Activated CD4-positive, alpha-beta T cell treated with anti-CD3 and anti-CD28 coated beads, Interleukin-2, amount 10 ng/mL, durations not matched to agents 24 days and 14 days (primary cell): ENCODE measurements at regions of chr7 and their contacts with region 1.

Region 1: DNA sequence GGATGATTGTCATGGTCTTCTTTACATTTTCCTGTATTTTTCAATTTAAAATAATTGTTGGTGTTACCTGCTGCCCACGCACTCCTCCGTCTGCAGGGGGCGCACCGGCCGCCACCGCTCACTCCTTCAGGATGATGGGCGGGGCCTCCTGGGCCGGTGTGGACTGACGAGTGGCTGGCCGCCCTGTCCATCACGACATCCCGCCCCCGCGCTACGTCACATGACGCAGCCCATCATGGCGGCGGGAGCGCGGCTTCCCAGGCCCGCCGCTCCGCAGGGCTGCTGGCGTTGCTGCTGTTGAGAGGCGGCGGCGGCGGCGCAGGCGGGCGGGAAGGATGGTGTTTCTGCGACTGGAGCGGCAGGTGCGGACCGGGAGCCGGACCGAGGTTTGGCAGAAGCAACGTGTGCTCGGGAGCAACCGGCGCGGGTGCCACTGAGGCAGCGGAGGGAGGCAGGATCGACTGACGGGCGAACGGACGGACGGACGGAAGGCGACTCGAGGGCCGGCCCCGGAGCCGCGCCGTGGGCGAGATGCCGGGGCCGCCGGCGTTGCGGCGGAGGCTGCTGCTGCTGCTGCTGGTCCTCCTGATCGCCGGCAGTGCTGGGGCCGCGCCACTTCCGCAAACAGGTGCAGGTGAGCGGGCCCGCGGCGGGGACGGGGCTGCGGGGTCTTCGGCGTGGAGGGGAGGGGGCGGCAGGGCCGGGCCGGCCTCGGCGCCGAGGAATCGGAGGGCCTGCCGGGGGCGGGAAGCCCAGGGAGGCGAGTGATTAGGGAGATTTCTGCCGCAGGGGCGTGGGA is at the start of gene LMTK2:
- DNase-seq: peak; percentile 99
- H3K4me3 Mint-ChIP-seq: peak within 1 kb of the TSS; percentile 99
- H3K27ac Mint-ChIP-seq: peak within 1 kb of the TSS; percentile 95
- H3K4me1 Mint-ChIP-seq: peaks cover 20% of the 10 kb centered on the region
- H3K27me3 Mint-ChIP-seq: no peaks in the 10 kb centered on the region
- total RNA-seq, gene LMTK2: 12.0 and 15.1 TPM in 2 replicates

Region 2: GRCh38 chr7:97430001-97430400 is 676.8 kb before region 1 on chr7:
- intact Hi-C with region 1: no loop called
- DNase-seq: no peak
- H3K4me3 Mint-ChIP-seq: no peak overlapping the region
- H3K27ac Mint-ChIP-seq: no peak overlapping the region
- H3K4me1 Mint-ChIP-seq: no peaks in the 10 kb centered on the region
- H3K27me3 Mint-ChIP-seq: no peaks in the 10 kb centered on the region

Region 3: GRCh38 chr7:97872025-97872669 is 234.7 kb before region 1 on chr7 and contains the start of gene ASNS:
- intact Hi-C with region 1: loop called (anchors 5 kb)
- DNase-seq: peak; percentile 97
- H3K4me3 Mint-ChIP-seq: peak within 1 kb of the TSS; percentile 92
- H3K27ac Mint-ChIP-seq: peak within 1 kb of the TSS; percentile 88
- H3K4me1 Mint-ChIP-seq: peaks cover 13% of the 10 kb centered on the region
- H3K27me3 Mint-ChIP-seq: no peaks in the 10 kb centered on the region
- total RNA-seq, gene ASNS: 80.6 and 84.1 TPM in 2 replicates

Region 4: GRCh38 chr7:97971990-97972943 is 134.6 kb before region 1 on chr7:
- intact Hi-C with region 1: loop called (anchors 5 kb)
- DNase-seq: peak; percentile 95
- H3K4me3 Mint-ChIP-seq: peak overlapping the region; percentile 96
- H3K27ac Mint-ChIP-seq: peak overlapping the region; percentile 95
- H3K4me1 Mint-ChIP-seq: peaks cover 12% of the 10 kb centered on the region
- H3K27me3 Mint-ChIP-seq: peaks cover 2% of the 10 kb centered on the region

Region 5: DNA sequence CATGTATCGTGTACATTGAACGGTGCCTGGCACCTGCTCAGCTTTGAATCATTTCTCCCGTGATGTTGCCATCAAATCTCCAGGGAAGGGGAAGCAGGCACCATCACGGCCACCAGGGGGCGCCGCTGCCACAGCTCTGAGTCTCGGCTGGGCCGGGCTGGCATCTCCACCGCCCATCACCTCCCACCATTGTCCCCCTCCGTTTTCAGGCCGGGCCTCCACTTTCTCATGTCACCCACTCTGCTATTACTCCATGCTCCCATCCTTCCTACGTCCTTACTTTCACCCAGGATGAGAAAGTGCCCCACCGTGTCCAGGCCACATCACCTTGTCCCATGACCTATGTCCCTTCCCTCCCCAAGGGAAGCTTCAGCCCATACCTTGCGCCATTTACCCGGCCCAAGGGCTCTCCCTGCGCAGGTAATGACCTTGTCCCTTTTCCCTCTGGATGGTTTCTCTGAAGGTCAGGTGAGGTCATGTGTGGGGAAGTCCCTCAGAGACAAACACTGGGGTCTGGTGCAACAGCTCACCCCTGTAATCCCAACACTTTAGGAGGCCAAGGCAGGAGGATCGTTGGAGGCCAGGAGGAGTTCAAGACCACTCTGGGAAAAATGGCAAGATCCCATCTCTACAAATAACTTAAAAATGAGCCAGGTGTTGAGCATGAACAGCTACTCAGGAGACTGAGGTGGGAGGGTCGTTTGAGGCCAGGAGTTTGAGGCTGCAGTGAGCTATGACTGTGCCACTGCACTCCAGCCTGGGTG is 85.1 kb before region 1 on chr7:
- intact Hi-C with region 1: loop called (anchors 1 kb)
- DNase-seq: peak; percentile 94
- H3K4me3 Mint-ChIP-seq: no peak overlapping the region
- H3K27ac Mint-ChIP-seq: no peak overlapping the region
- H3K4me1 Mint-ChIP-seq: peaks cover 5% of the 10 kb centered on the region
- H3K27me3 Mint-ChIP-seq: no peaks in the 10 kb centered on the region

Region 6: DNA sequence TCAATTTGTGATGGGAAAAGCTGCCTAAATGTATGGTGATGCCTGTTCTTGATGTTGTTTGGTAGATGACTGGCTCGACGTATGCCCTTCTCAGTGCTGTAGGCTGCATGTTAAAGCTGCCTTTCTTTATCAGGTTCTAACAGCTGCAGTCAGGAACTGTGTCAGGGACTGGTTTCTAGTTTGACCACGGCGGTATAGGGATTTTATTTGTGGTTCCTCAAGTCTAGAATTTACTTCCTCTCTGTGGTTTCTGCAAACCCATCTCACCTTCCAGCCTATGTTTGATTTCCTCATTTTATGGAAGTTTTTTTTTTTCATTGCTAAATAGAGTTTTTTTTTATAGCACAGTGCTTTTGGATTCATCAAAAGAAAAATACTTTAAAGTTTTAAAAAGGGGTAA is 26.3 kb after region 1 on chr7:
- intact Hi-C with region 1: loop called (anchors 2 kb)
- DNase-seq: peak; percentile 75
- H3K4me3 Mint-ChIP-seq: peak overlapping the region; percentile 58
- H3K27ac Mint-ChIP-seq: peak overlapping the region; percentile 18
- H3K4me1 Mint-ChIP-seq: peaks cover 36% of the 10 kb centered on the region
- H3K27me3 Mint-ChIP-seq: peaks cover 13% of the 10 kb centered on the region

Region 7: GRCh38 chr7:98168181-98168905 is 61.5 kb after region 1 on chr7:
- intact Hi-C with region 1: loop called (anchors 1 kb)
- DNase-seq: peak; percentile 90
- H3K4me3 Mint-ChIP-seq: no peak overlapping the region
- H3K27ac Mint-ChIP-seq: no peak overlapping the region
- H3K4me1 Mint-ChIP-seq: peaks cover 6% of the 10 kb centered on the region
- H3K27me3 Mint-ChIP-seq: no peaks in the 10 kb centered on the region

Region 8: GRCh38 chr7:98251841-98252639 is 145.2 kb after region 1 on chr7 and contains the start of gene TECPR1:
- intact Hi-C with region 1: loop called (anchors 2 kb)
- DNase-seq: peak; percentile 98
- H3K4me3 Mint-ChIP-seq: peak within 1 kb of the TSS; percentile 98
- H3K27ac Mint-ChIP-seq: peak within 1 kb of the TSS; percentile 98
- H3K4me1 Mint-ChIP-seq: peaks cover 52% of the 10 kb centered on the region
- H3K27me3 Mint-ChIP-seq: no peaks in the 10 kb centered on the region
- total RNA-seq, gene TECPR1: 43.1 and 47.8 TPM in 2 replicates